AG04449 (cell line): ENCODE measurements at regions of chr2 and their contacts with region 1.

Region 1: GRCh38 chr2:25951071-25951547 is 31.2 kb downstream of the KIF3C start:
- DNase-seq: peak; percentile 17
- H3K4me3 ChIP-seq: no peak overlapping the region
- CTCF ChIP-seq: peak; percentile 95

Region 2: DNA sequence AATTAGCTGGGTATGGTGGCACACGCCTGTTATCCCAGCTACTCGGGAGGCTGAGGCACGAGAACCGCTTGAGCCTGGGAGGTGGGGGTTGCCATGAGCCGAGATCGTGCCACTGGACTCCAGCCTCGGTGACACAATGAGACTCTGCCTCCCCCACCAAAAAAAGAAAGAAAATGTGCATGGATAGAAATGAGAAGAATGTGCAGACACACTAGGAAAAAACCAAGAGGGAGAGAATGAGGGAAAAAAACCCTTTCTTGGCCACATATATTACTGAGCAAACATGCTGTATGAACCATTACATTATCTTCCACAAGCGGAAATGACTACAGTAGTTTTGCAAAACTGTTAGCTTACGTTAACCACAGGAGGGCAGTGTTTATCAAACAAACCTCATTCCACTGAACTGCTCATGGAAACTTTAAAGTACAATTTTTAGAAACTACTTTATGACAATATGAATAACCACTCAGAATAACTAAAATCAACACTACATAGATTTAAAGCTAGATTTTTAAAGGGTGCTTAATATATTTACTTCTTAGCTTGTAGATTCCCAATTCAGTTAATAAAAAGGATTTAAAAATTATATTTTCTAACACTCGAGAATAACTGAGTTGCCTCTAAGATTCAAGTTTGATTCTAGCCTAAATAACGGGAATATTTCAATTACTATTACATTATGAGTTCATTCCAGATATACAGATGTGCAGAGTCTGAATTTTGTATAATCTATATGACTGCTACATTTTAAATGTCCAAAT is 99.2 kb before region 1 on chr2:
- CTCF ChIA-PET with region 1: interaction called, 13 read pairs
- POLR2A ChIA-PET with region 1: no interaction called
- DNase-seq: peak; percentile 74
- H3K4me3 ChIP-seq: no peak overlapping the region
- CTCF ChIP-seq: peak; percentile 44

Region 3: DNA sequence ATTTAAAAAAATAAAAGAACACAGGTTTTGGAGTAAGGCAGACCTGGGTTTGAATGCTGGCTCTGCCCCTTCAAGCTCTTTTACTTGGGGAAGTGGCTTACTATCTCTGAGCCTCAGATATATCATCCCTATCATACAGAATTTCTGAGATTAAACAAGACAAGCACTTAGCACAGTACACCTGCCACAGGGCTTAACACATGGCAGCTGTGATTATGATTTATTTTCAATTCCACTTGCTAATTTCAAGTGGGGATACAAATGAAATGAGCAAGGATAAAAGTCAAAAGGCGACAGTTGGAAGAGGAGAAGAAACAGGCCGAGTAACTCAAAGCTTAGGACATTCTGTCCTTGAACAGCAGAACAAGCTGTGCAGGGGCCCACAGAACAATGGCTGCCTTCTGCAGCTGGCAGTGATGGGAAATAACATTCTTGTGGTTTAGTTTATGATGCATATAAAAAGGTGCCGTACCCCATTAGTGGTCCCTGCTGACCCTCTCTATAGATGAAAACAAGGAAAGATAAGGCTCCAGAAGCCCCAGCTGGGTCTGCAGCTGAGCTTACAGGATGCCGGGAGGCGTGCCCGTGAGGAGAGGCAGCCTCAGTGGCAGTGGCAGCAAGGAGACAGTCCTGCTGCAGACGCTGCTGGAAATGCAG is 14.1 kb before region 1 on chr2:
- CTCF ChIA-PET with region 1: interaction called, 26 read pairs
- POLR2A ChIA-PET with region 1: no interaction called
- DNase-seq: no peak
- H3K4me3 ChIP-seq: no peak overlapping the region
- CTCF ChIP-seq: no peak

Region 4: GRCh38 chr2:25976983-25977741 is 26.1 kb after region 1 on chr2:
- CTCF ChIA-PET with region 1: interaction called, 14 read pairs
- POLR2A ChIA-PET with region 1: no interaction called
- DNase-seq: no peak
- H3K4me3 ChIP-seq: no peak overlapping the region
- CTCF ChIP-seq: no peak

Region 5: GRCh38 chr2:26033818-26034636 is 82.9 kb after region 1 on chr2 and contains the start of gene RAB10:
- CTCF ChIA-PET with region 1: interaction called, 12 read pairs
- POLR2A ChIA-PET with region 1: no interaction called
- DNase-seq: peak; percentile 88
- H3K4me3 ChIP-seq: peak within 1 kb of the TSS; percentile 75
- CTCF ChIP-seq: no peak

Region 6: GRCh38 chr2:26184555-26185303 is 233.6 kb after region 1 on chr2:
- CTCF ChIA-PET with region 1: interaction called, 24 read pairs
- POLR2A ChIA-PET with region 1: no interaction called
- DNase-seq: peak; percentile 7
- H3K4me3 ChIP-seq: peak overlapping the region; percentile 67
- CTCF ChIP-seq: peak; percentile 78

Region 7: DNA sequence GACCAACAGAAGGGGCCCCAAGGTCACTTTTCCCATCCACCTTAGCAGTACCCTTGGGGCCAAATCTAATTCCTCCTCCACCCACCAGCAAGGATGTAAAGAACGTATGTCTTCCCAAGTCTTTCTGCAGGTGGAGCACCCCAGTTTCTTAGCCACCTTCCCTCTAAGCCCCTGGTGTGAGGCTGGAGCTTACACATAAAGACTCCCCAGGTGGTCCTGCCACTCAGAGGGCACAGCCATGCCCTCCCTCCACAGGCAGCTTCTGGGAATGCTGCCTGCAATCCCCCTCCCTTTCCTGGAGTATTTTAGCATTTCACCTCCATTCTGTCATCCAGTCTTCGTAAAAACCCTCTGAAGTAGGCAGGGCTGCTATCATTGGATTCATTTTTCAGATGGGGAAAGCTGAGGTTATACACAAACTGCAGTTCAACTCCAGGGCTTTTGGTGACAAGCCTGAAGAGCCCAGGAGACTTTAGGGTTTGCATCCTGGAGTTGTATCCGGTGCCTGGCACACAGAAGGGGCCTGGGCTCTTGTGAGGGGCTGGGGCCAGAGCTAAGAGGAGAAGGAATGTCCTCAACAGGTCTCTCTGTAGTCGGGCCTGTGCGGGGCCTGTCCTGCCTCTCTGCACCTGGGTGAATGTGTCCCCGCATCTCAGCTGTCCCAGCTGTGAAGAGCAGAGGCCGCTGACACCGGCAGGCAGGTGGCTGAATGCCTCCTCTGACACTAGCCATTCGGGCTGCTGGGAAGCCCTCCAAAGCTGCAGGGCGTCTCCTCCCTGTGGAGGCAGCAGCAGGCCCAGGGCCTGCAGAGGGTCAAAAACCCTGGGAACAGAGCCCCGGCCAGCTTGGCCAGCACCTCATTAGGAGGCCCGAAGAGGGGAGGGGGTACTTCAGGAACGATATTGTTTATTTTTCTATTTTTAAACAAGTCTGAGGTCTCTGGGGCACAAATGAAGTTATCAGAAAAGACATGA is 662.4 kb after region 1 on chr2:
- CTCF ChIA-PET with region 1: no interaction called
- POLR2A ChIA-PET with region 1: no interaction called
- DNase-seq: no peak
- H3K4me3 ChIP-seq: no peak overlapping the region
- CTCF ChIP-seq: no peak